Mammary epithelial cell (primary cell): ENCODE measurements at regions of chr3 and their contacts with region 1.

Region 1: DNA sequence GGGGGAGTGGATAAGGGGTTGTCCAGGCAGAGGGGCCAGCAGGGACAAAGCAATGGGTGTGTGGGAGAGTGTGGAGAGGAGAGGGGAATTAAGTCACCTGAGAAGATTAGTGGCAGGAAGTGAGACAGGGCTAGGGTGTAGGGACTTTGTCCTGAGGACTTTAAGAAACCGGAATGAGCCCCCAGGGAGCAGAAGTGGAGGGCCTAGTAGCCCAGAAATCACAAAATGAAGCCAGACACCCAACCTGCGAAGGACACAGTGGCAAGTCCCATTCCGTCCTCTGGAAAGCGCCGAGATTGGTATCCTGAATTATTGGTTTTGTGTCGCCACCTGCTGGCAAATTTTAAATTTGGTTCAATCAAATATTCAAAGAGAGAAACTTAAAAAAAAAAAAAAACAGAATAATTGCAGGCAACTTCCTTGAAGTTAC is 78.0 kb upstream of the SLC25A36 start:
- DNase-seq: peak; percentile 43
- H3K4me3 ChIP-seq: no peak overlapping the region
- H3K27ac ChIP-seq: no peak overlapping the region
- H3K4me1 ChIP-seq: no peaks in the 10 kb centered on the region
- H3K27me3 ChIP-seq: no peaks in the 10 kb centered on the region
- CTCF ChIP-seq: peak; percentile 38 to 48

Region 2: DNA sequence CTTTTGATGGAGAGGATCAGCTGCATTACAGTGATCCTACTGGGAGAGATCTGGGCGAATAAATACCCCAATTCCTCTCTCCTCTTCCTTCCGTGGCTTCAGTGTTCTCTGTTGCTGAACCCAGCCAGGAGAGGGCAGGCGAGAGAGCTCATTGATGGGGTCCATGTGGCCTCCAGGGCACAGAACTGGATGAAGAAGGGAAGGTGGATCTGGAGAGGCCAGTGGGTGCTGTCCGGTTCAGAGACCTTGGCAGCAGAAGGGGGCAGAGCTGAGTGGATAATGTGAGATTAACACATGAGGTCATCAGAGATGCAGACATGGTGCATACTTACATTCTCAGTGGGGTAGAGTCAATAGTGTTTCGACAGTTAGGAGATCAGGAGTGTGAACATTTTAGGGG is 735.0 kb before region 1 on chr3:
- CTCF ChIA-PET with region 1: no interaction called
- dilution Hi-C with region 1: no loop called
- in situ Hi-C with region 1: no loop called
- intact Hi-C with region 1: loop called (anchors 1 kb)
- DNase-seq: peak; percentile 8
- H3K4me3 ChIP-seq: no peak overlapping the region
- H3K27ac ChIP-seq: no peak overlapping the region
- H3K4me1 ChIP-seq: no peaks in the 10 kb centered on the region
- H3K27me3 ChIP-seq: no peaks in the 10 kb centered on the region
- CTCF ChIP-seq: peak; percentile 27 to 59

Region 3: DNA sequence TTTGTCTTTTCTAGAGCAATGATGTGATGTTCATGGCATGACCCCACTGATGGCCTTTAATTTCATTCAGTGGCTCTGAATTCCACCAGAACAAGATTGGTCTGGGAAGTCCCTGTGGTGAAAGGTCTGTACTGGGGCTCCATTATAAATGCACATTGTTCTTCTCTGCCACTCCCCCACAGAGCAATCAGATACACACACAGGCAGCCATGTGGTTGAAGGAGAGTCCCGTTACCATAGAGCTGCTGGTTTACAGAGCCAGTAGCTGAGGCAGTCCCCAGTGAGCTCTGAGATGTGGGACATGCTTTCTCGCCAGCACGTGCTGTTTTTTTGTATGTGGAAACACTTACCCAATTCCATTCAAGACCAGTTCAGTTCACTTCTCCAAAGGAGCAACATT is 358.4 kb before region 1 on chr3:
- CTCF ChIA-PET with region 1: no interaction called
- dilution Hi-C with region 1: no loop called
- in situ Hi-C with region 1: no loop called
- intact Hi-C with region 1: loop called (anchors 10 kb)
- DNase-seq: peak; percentile 78
- H3K4me3 ChIP-seq: no peak overlapping the region
- H3K27ac ChIP-seq: no peak overlapping the region
- H3K4me1 ChIP-seq: peaks cover 6% of the 10 kb centered on the region
- H3K27me3 ChIP-seq: no peaks in the 10 kb centered on the region
- CTCF ChIP-seq: no peak

Region 4: GRCh38 chr3:140552898-140553297 is 310.7 kb before region 1 on chr3:
- CTCF ChIA-PET with region 1: no interaction called
- dilution Hi-C with region 1: no loop called
- in situ Hi-C with region 1: no loop called
- intact Hi-C with region 1: loop called (anchors 1 kb)
- DNase-seq: peak; percentile 65
- H3K4me3 ChIP-seq: no peak overlapping the region
- H3K27ac ChIP-seq: no peak overlapping the region
- H3K4me1 ChIP-seq: no peaks in the 10 kb centered on the region
- H3K27me3 ChIP-seq: no peaks in the 10 kb centered on the region
- CTCF ChIP-seq: peak in 1 of 2 donors; percentile 13

Region 5: GRCh38 chr3:140736863-140737460 is 126.6 kb before region 1 on chr3:
- CTCF ChIA-PET with region 1: no interaction called
- dilution Hi-C with region 1: no loop called
- in situ Hi-C with region 1: no loop called
- intact Hi-C with region 1: loop called (anchors 1 kb)
- DNase-seq: peak; percentile 36
- H3K4me3 ChIP-seq: no peak overlapping the region
- H3K27ac ChIP-seq: no peak overlapping the region
- H3K4me1 ChIP-seq: no peaks in the 10 kb centered on the region
- H3K27me3 ChIP-seq: peaks cover 13% of the 10 kb centered on the region
- CTCF ChIP-seq: peak; percentile 47 to 64

Region 6: DNA sequence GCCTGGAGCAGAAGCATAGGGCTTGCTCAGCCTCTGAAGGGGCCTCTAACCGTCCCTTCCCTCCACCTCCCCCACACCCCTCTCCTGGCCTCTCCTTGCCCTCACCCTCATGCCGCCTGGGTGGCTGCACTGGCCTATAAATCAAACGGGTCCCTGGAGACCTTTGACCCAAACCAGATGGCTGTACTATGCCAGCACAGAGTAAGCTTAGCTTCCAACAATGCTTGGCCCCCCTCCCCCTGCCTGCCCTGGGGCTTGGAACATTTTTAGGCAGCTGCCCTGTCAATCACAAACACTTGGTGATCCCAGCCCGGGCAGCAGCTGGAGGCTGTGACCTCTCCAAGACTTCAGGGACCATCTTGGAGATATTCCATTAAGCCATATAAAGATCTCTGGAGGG is 220.7 kb after region 1 on chr3:
- CTCF ChIA-PET with region 1: no interaction called
- dilution Hi-C with region 1: no loop called
- in situ Hi-C with region 1: no loop called
- intact Hi-C with region 1: no loop called
- DNase-seq: no peak
- H3K4me3 ChIP-seq: no peak overlapping the region
- H3K27ac ChIP-seq: no peak overlapping the region
- H3K4me1 ChIP-seq: no peaks in the 10 kb centered on the region
- H3K27me3 ChIP-seq: peaks cover 3% of the 10 kb centered on the region
- CTCF ChIP-seq: no peak

Region 7: GRCh38 chr3:141129541-141130011 is 266.0 kb after region 1 on chr3:
- CTCF ChIA-PET with region 1: no interaction called
- dilution Hi-C with region 1: no loop called
- in situ Hi-C with region 1: no loop called
- intact Hi-C with region 1: no loop called
- DNase-seq: no peak
- H3K4me3 ChIP-seq: no peak overlapping the region
- H3K27ac ChIP-seq: no peak overlapping the region
- H3K4me1 ChIP-seq: no peaks in the 10 kb centered on the region
- H3K27me3 ChIP-seq: no peaks in the 10 kb centered on the region
- CTCF ChIP-seq: no peak